Mammary epithelial cell (primary cell): ENCODE measurements at regions of chr3 and their contacts with region 1.

Region 1: DNA sequence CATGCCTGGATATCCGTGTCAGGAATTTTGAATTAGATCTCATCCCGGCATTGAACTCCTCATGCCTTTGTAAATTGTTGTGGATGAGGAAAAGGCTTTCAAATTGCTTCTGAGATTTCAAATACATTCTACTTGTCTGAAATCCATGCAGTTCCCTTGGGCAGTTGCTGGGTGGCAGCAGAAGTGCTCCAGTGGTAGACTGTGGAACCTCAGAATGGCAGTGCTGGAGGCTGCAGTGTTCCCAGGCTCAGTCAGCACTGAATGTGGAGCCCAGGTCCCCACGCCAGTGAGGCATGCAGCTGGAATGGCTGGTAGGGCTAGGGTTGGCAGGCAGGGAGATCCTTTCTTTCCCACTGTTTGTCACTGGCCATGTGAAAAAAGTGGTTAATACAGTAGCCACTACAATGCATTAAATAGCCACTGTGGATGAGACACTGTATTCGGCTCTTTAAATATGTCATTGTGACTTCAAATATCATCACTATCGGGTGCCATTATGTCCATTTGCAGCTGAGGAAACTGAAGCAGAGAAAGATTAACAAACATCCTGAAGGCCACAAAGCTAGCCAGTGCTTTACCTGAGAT is 98.6 kb downstream of the TPRG1 start:
- DNase-seq: peak; percentile 84
- H3K4me3 ChIP-seq: no peak overlapping the region
- H3K27ac ChIP-seq: peak overlapping the region; percentile 90
- H3K4me1 ChIP-seq: peaks cover 51% of the 10 kb centered on the region
- H3K27me3 ChIP-seq: no peaks in the 10 kb centered on the region
- CTCF ChIP-seq: peak; percentile 97

Region 2: GRCh38 chr3:189324538-189325138 is 54.3 kb after region 1 on chr3:
- CTCF ChIA-PET with region 1: interaction called, 4 read pairs
- dilution Hi-C with region 1: no loop called
- in situ Hi-C with region 1: no loop called
- intact Hi-C with region 1: loop called (anchors 5 kb)
- DNase-seq: peak; percentile 99
- H3K4me3 ChIP-seq: no peak overlapping the region
- H3K27ac ChIP-seq: peak overlapping the region; percentile 48
- H3K4me1 ChIP-seq: peaks cover 40% of the 10 kb centered on the region
- H3K27me3 ChIP-seq: no peaks in the 10 kb centered on the region
- CTCF ChIP-seq: no peak

Region 3: GRCh38 chr3:189488241-189488767 is 218.0 kb after region 1 on chr3:
- CTCF ChIA-PET with region 1: no interaction called
- dilution Hi-C with region 1: no loop called
- in situ Hi-C with region 1: no loop called
- intact Hi-C with region 1: loop called (anchors 5 kb)
- DNase-seq: peak; percentile 31
- H3K4me3 ChIP-seq: no peak overlapping the region
- H3K27ac ChIP-seq: no peak overlapping the region
- H3K4me1 ChIP-seq: peaks cover 17% of the 10 kb centered on the region
- H3K27me3 ChIP-seq: no peaks in the 10 kb centered on the region
- CTCF ChIP-seq: no peak

Region 4: GRCh38 chr3:189588070-189588820 is 317.9 kb after region 1 on chr3:
- CTCF ChIA-PET with region 1: interaction called, 3 read pairs
- dilution Hi-C with region 1: no loop called
- in situ Hi-C with region 1: loop called in 1 of 2 experiments (anchors 10 kb)
- intact Hi-C with region 1: loop called (anchors 5 kb)
- DNase-seq: peak; percentile 90
- H3K4me3 ChIP-seq: peak overlapping the region; percentile 9 to 24 (median 9)
- H3K27ac ChIP-seq: peak overlapping the region; percentile 92
- H3K4me1 ChIP-seq: peaks cover 46% of the 10 kb centered on the region
- H3K27me3 ChIP-seq: no peaks in the 10 kb centered on the region
- CTCF ChIP-seq: no peak

Region 5: GRCh38 chr3:189727898-189728297 is 457.6 kb after region 1 on chr3:
- CTCF ChIA-PET with region 1: no interaction called
- dilution Hi-C with region 1: no loop called
- in situ Hi-C with region 1: no loop called
- intact Hi-C with region 1: loop called (anchors 5 kb)
- DNase-seq: no peak
- H3K4me3 ChIP-seq: no peak overlapping the region
- H3K27ac ChIP-seq: no peak overlapping the region
- H3K4me1 ChIP-seq: peaks cover 12% of the 10 kb centered on the region
- H3K27me3 ChIP-seq: no peaks in the 10 kb centered on the region
- CTCF ChIP-seq: no peak

Region 6: DNA sequence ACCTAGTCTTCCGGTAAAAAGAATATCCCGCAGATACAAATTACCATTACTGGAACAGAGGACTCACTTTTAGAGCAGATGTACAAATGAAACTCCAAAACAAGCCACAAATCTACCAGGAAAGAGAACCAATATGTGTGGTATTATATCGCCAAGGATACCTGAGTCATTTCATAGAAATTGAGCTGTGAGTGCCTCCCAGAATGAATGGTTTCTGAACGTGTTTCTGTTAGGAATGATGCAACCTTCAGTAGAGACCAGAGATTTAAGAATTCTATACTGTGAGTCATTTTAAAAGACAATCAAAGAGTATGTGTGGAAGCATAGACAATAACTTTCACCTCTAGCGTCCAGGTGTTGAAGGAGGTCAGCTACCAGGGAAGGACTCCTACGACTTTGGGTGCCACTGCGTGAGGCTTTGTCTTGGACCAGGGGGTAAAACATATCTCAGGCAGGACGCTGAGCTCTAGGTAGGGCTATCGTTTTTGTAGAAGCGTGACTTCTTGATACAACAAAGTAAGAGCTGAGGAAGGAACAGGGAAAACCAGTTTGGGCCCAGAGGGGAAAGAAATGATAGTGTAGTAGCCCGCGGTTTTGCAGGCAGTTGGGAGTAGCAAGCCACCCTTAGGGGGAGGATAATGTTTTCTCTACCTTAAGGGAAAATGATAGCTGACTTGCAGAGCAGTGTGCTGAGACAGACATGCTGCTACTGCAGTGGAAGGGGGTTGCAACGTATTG is 571.3 kb after region 1 on chr3:
- CTCF ChIA-PET with region 1: interaction called, 4 read pairs
- dilution Hi-C with region 1: no loop called
- in situ Hi-C with region 1: no loop called
- intact Hi-C with region 1: loop called (anchors 1 kb)
- DNase-seq: peak; percentile 98
- H3K4me3 ChIP-seq: peak overlapping the region in 2 of 3 experiments; percentile 6 to 22
- H3K27ac ChIP-seq: peak overlapping the region; percentile 99
- H3K4me1 ChIP-seq: peaks cover 67% of the 10 kb centered on the region
- H3K27me3 ChIP-seq: no peaks in the 10 kb centered on the region
- CTCF ChIP-seq: no peak

Region 7: DNA sequence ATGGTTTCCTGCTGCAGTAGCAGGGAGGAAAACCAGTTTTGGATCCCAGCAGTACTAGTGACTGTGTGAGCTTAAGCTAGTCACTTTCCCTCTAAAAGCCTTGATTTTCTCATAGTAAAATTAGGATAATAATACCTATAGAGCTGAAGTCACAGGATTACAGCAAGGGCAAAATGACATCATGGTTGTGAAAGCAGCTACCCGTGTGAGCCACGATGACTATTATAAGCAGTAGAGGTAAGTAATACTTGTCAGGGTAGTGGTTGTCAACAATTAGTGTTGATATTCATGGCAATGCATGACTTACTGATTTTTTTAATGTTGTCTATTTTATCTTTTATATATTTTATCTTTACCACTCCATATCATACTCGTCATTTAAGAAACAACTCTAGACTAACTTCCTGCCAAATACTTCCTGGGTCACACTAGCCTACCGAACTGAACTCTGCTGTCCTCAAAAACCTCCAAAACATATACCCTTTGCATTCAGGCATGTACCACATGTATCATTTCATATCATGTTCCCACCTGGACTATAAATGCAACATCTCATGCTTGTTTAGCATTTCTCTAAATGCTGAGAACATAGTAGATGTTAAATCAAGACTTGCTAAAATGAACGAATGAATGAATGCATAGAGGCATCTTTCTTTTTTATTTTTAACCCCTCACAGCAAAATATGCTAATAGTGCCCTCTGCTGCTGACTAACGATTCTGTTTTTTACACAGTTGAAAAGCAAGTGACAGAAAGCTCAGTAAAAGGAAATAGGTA is 677.8 kb after region 1 on chr3:
- CTCF ChIA-PET with region 1: interaction called, 9 read pairs
- dilution Hi-C with region 1: no loop called
- in situ Hi-C with region 1: loop called (anchors 5 to 10 kb)
- intact Hi-C with region 1: loop called (anchors 1 kb)
- DNase-seq: peak; percentile 68
- H3K4me3 ChIP-seq: no peak overlapping the region
- H3K27ac ChIP-seq: peak overlapping the region; percentile 21
- H3K4me1 ChIP-seq: peaks cover 29% of the 10 kb centered on the region
- H3K27me3 ChIP-seq: no peaks in the 10 kb centered on the region
- CTCF ChIP-seq: peak; percentile 64 to 69